CD4-positive, alpha-beta T cell (primary cell): ENCODE measurements at regions of chr6 and their contacts with region 1.

Region 1: DNA sequence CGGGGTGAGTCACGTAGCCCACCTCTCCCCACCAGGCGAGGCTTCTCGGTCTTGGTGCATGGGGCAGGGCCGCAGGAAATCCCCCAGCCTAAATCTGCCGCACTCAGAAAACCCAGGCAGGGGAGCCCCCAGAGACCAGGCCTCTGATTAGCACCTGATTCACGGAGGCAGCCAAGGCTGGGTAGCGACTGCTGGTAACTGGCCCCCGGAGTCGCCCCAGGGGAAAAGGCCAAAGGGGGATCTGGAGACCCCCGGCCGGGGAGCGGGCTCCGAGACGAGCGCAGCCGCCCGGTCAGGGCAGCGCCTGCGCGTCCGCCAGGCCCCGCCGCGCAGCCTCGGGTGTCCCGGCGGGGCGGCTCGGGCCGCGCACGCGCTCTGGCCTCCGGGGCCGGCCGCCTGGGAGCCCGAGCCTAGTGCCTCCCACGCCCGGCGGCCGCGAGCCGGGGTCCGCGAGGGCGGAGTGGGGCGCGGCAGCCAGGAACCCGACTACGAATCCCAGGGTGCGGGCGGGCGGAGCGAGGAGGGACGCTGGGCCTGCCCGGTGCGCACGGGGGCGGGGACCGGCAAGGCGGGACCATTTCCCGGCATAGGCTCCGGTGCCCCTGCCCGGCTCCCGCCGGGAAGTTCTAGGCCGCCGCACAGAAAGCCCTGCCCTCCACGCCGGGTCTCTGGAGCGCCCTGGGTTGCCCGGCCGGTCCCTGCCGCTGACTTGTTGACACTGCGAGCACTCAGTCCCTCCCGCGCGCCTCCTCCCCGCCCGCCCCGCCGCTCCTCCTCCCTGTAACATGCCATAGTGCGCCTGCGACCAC is at the start of gene DUSP22:
- DNase-seq: peak; percentile 48 to 91 (median 75)
- ATAC-seq: peak; percentile 67
- H3K4me3 ChIP-seq: peak within 1 kb of the TSS; percentile 65
- H3K4me3 Mint-ChIP-seq: peak within 1 kb of the TSS; percentile 97
- H3K27ac ChIP-seq: peak within 1 kb of the TSS; percentile 77 to 84
- H3K27ac Mint-ChIP-seq: peak within 1 kb of the TSS; percentile 95
- H3K4me1 ChIP-seq: peaks cover 30% of the 10 kb centered on the region
- H3K4me1 Mint-ChIP-seq: peaks cover 57% of the 10 kb centered on the region
- H3K27me3 ChIP-seq: no peaks in the 10 kb centered on the region
- H3K27me3 Mint-ChIP-seq: no peaks in the 10 kb centered on the region
- CTCF ChIP-seq: no peak
- total RNA-seq, gene DUSP22: 25.4 to 26.3 TPM

Region 2: DNA sequence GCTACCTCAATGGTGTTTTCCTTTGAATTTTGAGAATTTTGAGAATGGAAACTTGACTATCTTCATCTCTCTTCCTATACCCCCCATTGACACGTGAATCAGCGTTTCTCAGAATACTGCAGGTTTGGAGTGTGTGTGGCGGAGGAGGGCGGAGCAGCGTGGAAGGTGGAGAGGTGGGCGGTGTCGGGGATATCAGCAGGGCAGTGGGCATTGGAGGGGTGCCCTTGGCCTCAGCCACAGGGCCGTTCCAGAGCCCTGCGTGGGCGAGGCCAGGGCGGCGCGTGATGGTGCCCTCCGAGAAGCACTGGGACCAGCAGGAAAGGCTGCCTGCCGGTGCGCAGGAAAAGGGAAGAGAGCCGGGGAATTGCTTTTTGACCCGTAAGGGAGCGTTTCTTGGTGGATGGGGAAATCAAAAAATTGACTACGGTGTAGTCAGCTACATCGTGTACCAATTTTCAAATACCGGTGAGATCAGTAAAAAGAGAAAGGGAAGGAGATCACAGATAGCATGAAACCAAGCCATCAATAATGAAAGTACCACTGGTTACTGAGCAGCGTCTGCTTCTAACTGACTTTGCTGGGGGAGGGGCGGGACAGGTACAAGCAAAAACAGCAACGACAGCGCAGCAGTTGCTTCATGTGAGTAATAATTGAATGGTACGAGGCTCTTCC is 82.3 kb before region 1 on chr6:
- CTCF ChIA-PET with region 1: no interaction called
- POLR2A ChIA-PET with region 1: no interaction called
- intact Hi-C with region 1: no loop called
- DNase-seq: peak in 11 of 14 experiments; percentile 16 to 64 (median 38)
- ATAC-seq: peak; percentile 81
- H3K4me3 ChIP-seq: peak overlapping the region; percentile 55
- H3K4me3 Mint-ChIP-seq: peak overlapping the region; percentile 93
- H3K27ac ChIP-seq: no peak overlapping the region
- H3K27ac Mint-ChIP-seq: peak overlapping the region; percentile 70
- H3K4me1 ChIP-seq: peaks cover 16% of the 10 kb centered on the region
- H3K4me1 Mint-ChIP-seq: peaks cover 12% of the 10 kb centered on the region
- H3K27me3 ChIP-seq: no peaks in the 10 kb centered on the region
- H3K27me3 Mint-ChIP-seq: no peaks in the 10 kb centered on the region
- CTCF ChIP-seq: no peak

Region 3: GRCh38 chr6:227074-227782 is 64.7 kb before region 1 on chr6:
- CTCF ChIA-PET with region 1: interaction called, 4 read pairs
- POLR2A ChIA-PET with region 1: interaction called, 5 read pairs
- intact Hi-C with region 1: loop called in 1 of 2 experiments (anchors 5 kb)
- DNase-seq: no peak
- ATAC-seq: no peak
- H3K4me3 ChIP-seq: no peak overlapping the region
- H3K4me3 Mint-ChIP-seq: no peak overlapping the region
- H3K27ac ChIP-seq: no peak overlapping the region
- H3K27ac Mint-ChIP-seq: no peak overlapping the region
- H3K4me1 ChIP-seq: peaks cover 28% of the 10 kb centered on the region
- H3K4me1 Mint-ChIP-seq: peaks cover 27% of the 10 kb centered on the region
- H3K27me3 ChIP-seq: no peaks in the 10 kb centered on the region
- H3K27me3 Mint-ChIP-seq: no peaks in the 10 kb centered on the region
- CTCF ChIP-seq: no peak

Region 4: DNA sequence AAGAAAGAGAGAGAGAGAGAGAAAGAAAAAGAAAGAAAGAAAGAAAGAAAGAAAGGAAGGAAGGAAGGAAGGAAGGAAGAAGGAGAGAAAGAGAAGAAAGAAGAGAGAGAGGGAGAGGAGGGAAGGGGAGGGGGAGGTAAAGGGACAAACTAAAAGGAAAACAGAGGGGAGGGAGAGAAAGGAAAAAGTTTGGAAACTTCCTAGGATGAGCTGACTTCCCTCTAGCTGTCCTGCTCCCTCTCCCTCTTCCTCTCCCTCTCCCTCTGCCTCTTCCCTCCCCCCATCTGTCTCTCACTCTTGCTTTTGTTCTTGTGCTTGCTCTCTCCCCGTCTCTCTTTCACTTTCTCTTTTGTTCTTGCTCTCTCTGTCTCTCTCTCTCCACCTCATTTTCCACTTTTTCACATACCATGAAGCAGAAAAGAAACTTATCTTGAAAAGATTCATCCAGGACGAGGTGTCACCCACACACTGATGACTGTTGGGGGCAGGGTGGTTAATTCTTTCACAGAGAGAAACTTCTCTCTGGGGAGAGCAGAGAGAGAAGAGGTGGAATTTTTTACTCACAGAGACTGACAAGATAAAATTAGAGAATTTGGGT is 56.0 kb before region 1 on chr6:
- CTCF ChIA-PET with region 1: no interaction called
- POLR2A ChIA-PET with region 1: no interaction called
- intact Hi-C with region 1: loop called in 1 of 2 experiments (anchors 2 kb)
- DNase-seq: peak in 4 of 14 experiments; percentile 32 to 88 (median 74)
- ATAC-seq: peak; percentile 85
- H3K4me3 ChIP-seq: peak overlapping the region; percentile 30
- H3K4me3 Mint-ChIP-seq: peak overlapping the region; percentile 65
- H3K27ac ChIP-seq: peak overlapping the region; percentile 30 to 50
- H3K27ac Mint-ChIP-seq: peak overlapping the region; percentile 81
- H3K4me1 ChIP-seq: peaks cover 25% of the 10 kb centered on the region
- H3K4me1 Mint-ChIP-seq: peaks cover 23% of the 10 kb centered on the region
- H3K27me3 ChIP-seq: no peaks in the 10 kb centered on the region
- H3K27me3 Mint-ChIP-seq: no peaks in the 10 kb centered on the region
- CTCF ChIP-seq: no peak

Region 5: GRCh38 chr6:307065-307814 is 15.3 kb after region 1 on chr6:
- CTCF ChIA-PET with region 1: no interaction called
- POLR2A ChIA-PET with region 1: no interaction called
- intact Hi-C with region 1: no loop called
- DNase-seq: no peak
- ATAC-seq: no peak
- H3K4me3 ChIP-seq: no peak overlapping the region
- H3K4me3 Mint-ChIP-seq: no peak overlapping the region
- H3K27ac ChIP-seq: no peak overlapping the region
- H3K27ac Mint-ChIP-seq: no peak overlapping the region
- H3K4me1 ChIP-seq: no peaks in the 10 kb centered on the region
- H3K4me1 Mint-ChIP-seq: peaks cover 12% of the 10 kb centered on the region
- H3K27me3 ChIP-seq: no peaks in the 10 kb centered on the region
- H3K27me3 Mint-ChIP-seq: no peaks in the 10 kb centered on the region
- CTCF ChIP-seq: no peak

Region 6: DNA sequence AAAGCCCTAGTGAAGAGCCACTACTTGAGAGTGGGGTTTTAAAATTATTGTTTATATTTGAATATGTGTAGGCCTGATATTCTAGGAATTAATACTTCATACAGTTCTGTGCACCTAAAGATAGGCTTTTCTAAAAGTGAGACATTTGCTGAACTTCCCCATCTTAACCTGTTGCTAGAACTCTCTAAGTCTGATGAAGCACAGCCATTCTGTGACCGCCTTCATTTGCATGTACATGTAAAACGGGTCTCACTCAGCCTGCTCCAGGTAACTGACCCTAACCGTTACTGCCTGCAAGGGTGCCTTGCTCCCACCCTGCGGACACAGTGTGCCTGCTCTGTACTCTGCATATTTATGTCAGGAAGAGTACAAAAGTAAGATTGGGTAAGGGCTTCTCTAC is 55.3 kb after region 1 on chr6:
- CTCF ChIA-PET with region 1: no interaction called
- POLR2A ChIA-PET with region 1: no interaction called
- intact Hi-C with region 1: no loop called
- DNase-seq: no peak
- ATAC-seq: no peak
- H3K4me3 ChIP-seq: no peak overlapping the region
- H3K4me3 Mint-ChIP-seq: no peak overlapping the region
- H3K27ac ChIP-seq: no peak overlapping the region
- H3K27ac Mint-ChIP-seq: no peak overlapping the region
- H3K4me1 ChIP-seq: no peaks in the 10 kb centered on the region
- H3K4me1 Mint-ChIP-seq: no peaks in the 10 kb centered on the region
- H3K27me3 ChIP-seq: no peaks in the 10 kb centered on the region
- H3K27me3 Mint-ChIP-seq: no peaks in the 10 kb centered on the region
- CTCF ChIP-seq: no peak

Region 7: DNA sequence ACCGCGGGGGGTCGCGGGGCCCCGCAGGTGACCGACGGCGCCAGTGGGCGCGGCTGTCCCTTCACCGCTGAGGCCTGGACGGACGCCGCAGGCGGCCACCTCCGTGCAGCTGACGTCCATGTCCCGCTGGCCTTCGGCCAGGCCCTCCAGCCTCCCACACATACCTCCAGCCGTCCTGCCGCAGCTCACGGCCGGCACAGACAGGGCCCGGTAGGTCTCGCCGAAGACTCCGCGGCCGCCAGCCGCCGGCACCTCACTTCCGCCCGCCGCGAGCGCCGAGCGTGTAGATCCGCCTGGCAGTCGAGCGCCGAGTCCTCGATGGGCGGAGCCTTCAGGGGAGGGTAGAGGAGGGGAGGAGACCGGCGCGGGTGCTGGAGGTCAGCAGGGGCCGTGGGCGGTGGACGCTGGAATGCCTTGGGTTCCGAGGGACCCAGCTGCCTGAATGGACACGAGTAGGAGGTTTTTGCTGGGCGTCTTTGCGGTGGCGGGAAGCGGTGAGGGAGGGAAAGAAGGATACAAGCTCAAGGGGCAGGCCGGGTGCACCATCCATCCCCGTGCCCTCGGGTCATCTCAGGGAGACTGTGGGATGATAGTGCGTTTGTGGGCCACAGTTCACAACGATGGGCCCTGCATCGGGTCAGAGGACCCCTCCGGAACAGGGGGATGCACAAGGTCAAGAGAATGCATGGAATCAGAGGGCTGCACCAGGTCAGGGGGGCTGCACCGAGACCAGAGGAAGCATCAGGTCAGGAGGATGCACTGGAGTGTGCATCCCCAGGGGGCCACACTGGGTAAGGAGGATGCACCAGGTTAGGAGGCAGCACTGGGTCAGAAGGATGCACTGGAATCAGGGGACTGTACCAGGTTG is 401.2 kb after region 1 on chr6 and contains the start of gene EXOC2:
- CTCF ChIA-PET with region 1: no interaction called
- POLR2A ChIA-PET with region 1: no interaction called
- intact Hi-C with region 1: loop called in 1 of 2 experiments (anchors 5 kb)
- DNase-seq: peak; percentile 66 to 90 (median 78)
- ATAC-seq: peak; percentile 77
- H3K4me3 ChIP-seq: peak within 1 kb of the TSS; percentile 78
- H3K4me3 Mint-ChIP-seq: peak within 1 kb of the TSS; percentile 97
- H3K27ac ChIP-seq: peak within 1 kb of the TSS; percentile 81 to 87
- H3K27ac Mint-ChIP-seq: peak within 1 kb of the TSS; percentile 96
- H3K4me1 ChIP-seq: peaks cover 29% of the 10 kb centered on the region
- H3K4me1 Mint-ChIP-seq: peaks cover 24% of the 10 kb centered on the region
- H3K27me3 ChIP-seq: no peaks in the 10 kb centered on the region
- H3K27me3 Mint-ChIP-seq: no peaks in the 10 kb centered on the region
- CTCF ChIP-seq: no peak
- total RNA-seq, gene EXOC2: 16.7 to 18.8 TPM